Activated CD4-positive, alpha-beta T cell treated with anti-CD3 and anti-CD28 coated beads, Interleukin-2, amount 10 ng/mL, durations not matched to agents 7 days and 5 days (primary cell): ENCODE measurements at regions of chr14 and their contacts with region 1.

Region 1: DNA sequence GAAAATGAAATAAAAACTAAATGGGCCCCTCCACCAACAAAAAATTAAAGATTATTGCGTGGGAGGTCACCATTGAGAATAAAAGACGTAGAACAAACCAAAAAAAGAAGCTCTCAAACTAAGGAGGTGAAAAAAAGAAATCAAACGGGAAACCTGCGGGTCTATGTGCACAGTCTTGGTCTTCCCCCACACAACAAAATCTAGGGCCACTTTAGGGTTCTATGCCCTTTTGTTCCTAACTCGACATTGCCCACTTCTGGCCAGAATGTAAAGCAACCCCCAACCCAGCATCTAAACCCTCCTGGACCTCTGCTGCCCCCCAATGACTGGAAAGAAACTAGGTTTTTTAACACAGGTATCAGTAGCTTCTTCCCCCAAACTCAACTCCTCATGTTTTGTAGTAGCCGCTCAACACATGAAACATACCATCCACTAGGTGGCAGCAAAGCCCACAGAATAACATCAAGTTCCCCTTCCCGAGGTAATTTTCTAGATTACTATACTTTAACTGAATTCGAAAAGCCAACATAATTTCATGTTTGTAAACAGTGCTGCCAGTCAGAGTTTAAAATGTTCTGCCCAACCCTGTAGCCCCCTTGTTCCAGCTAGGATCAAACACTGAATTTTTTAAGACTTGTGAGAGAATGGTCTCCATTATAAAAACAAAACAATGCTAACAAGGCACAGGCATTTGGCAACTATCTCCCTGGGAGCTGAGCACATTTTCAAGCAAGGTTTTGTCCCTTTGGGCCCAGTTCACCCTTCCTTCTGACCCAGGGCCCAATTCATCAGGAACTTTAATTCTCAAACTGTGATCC is 18.7 kb downstream of the DAD1 start:
- DNase-seq: peak; percentile 94
- H3K4me3 Mint-ChIP-seq: peak overlapping the region; percentile 78
- H3K27ac Mint-ChIP-seq: peak overlapping the region; percentile 97
- H3K4me1 Mint-ChIP-seq: peaks cover 68% of the 10 kb centered on the region
- H3K27me3 Mint-ChIP-seq: no peaks in the 10 kb centered on the region

Region 2: DNA sequence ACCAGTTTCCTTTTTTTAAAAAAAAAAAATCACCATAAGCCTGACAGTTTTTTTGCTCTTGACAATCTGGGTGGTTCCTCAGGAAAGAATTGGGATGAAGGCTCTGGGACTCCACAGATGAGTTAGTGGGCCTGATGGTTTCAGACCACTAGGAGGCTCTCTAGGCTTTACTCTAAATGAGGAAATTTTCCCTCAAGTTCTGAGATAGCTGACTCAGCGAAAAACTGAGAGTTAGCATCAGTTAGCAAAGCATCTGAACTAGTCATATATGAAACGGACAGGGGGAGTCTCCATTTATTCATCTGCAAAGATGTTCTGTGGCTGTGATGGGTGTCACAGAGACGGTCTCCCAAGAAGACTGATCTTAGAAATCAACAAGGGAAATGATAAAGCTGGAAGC is 582.4 kb before region 1 on chr14:
- CTCF ChIA-PET with region 1: interaction called, 20 read pairs
- POLR2A ChIA-PET with region 1: no interaction called
- DNase-seq: peak; percentile 30
- H3K4me3 Mint-ChIP-seq: no peak overlapping the region
- H3K27ac Mint-ChIP-seq: peak overlapping the region; percentile 73
- H3K4me1 Mint-ChIP-seq: peaks cover 35% of the 10 kb centered on the region
- H3K27me3 Mint-ChIP-seq: peaks cover 7% of the 10 kb centered on the region

Region 3: GRCh38 chr14:22531451-22532344 is 38.6 kb before region 1 on chr14:
- CTCF ChIA-PET with region 1: interaction called, 18 read pairs
- POLR2A ChIA-PET with region 1: interaction called, 3 read pairs
- DNase-seq: no peak
- H3K4me3 Mint-ChIP-seq: peak overlapping the region; percentile 77
- H3K27ac Mint-ChIP-seq: peak overlapping the region; percentile 91
- H3K4me1 Mint-ChIP-seq: peaks cover 89% of the 10 kb centered on the region
- H3K27me3 Mint-ChIP-seq: no peaks in the 10 kb centered on the region

Region 4: GRCh38 chr14:22589096-22589839 is 18.9 kb after region 1 on chr14 and contains the start of gene DAD1:
- CTCF ChIA-PET with region 1: interaction called, 124 read pairs
- POLR2A ChIA-PET with region 1: interaction called, 3 read pairs
- DNase-seq: peak; percentile 100
- H3K4me3 Mint-ChIP-seq: peak within 1 kb of the TSS; percentile 95
- H3K27ac Mint-ChIP-seq: peak within 1 kb of the TSS; percentile 98
- H3K4me1 Mint-ChIP-seq: peaks cover 59% of the 10 kb centered on the region
- H3K27me3 Mint-ChIP-seq: peaks cover 1% of the 10 kb centered on the region
- total RNA-seq, gene DAD1: 169 to 233 TPM

Region 5: DNA sequence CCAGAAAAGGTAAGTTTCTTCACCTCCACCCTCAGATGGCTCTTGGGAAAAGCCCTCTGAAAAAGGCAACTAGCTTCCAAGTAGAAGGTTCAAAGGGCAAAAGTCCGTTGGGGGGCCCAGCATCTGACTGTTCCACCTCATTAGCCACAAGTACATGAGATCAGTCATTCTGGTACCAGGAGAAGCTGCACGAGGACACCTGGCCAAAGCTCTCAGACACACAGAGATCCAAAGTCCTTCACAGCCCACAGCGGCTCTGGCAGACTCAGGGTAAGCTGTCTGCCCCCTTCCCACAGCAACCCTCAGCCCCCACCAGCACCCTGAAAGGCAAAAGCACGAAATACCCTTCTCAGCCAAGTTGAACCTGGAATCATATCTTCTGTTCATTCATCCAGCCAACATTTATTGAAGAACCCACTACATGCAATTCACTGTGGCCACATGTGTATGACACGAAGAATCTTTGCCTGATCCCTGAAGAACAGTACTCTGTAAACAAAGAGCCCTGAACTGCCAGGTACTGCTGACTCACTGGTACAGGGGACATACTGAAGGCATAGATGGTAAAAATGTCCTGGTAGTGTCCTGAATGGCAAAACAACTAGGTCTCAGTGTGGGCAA is 225.9 kb after region 1 on chr14:
- CTCF ChIA-PET with region 1: interaction called, 10 read pairs
- POLR2A ChIA-PET with region 1: no interaction called
- DNase-seq: no peak
- H3K4me3 Mint-ChIP-seq: no peak overlapping the region
- H3K27ac Mint-ChIP-seq: no peak overlapping the region
- H3K4me1 Mint-ChIP-seq: no peaks in the 10 kb centered on the region
- H3K27me3 Mint-ChIP-seq: peaks cover 18% of the 10 kb centered on the region

Region 6: DNA sequence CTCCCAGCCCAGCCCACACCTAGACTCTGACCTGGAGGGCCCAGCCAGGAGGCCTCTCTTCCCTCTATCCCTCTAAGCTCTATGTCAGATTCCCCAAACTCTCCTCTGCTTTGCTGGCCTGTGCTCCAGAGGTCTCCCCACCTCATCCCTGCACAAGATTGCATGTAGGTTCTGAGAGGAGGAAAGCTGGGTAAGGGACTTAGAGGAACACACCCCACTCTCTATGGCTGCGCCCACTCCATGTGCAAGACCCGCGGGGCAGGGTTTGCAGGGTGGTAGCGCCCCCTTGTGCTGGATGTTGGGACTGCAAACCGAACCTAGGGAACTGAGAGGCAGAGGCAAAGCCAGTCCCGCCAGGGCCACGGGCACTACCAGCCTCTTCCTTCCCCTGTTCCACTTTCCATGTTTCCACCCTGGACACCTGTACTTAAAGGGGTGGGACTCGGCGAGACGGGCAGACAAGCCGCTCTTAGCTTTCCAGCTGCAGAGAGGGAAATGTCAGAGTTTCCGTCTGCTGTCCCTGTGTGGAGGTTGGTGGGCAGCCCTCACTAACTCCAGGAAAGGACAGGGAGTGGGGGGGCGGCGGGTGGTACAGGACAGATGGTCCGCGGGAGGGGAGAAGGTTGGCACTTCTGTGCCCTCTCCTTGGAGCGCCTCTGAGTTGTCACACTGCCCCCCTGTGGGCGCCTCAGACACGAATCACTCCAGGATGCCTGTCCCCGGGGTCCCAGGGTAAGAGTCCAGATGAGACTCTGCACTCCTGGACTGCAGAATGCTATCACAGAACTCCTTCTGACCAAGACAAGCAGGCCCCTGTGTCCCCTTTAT is 282.8 kb after region 1 on chr14:
- CTCF ChIA-PET with region 1: interaction called, 90 read pairs
- POLR2A ChIA-PET with region 1: no interaction called
- DNase-seq: peak; percentile 87
- H3K4me3 Mint-ChIP-seq: peak overlapping the region; percentile 72
- H3K27ac Mint-ChIP-seq: peak overlapping the region; percentile 66
- H3K4me1 Mint-ChIP-seq: peaks cover 37% of the 10 kb centered on the region
- H3K27me3 Mint-ChIP-seq: peaks cover 28% of the 10 kb centered on the region

Region 7: DNA sequence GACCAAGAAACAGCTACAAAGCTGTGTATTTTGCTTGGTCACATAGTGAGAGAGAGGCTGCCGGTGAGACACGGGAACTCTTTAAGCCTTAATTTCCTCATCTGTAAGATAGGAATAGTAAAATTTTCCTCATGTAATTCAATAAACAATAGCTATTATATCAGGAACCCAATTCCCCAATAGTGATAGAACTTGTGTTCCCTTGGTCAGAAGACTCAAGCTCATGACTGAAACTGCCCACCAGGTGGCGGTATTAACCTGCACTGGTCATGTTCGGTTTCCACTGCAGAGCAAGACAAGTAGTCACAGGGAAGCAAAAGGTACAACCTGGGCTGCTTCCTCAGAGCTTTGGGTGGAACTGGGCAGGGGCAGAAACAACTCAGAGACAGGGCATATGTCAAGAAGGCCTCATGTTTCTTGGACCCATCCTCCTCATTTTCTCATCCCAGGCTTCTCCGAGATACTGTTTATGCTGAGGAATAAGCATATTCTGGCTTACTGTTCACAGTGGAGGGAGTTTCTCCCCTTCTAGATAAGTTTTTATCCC is 416.2 kb after region 1 on chr14:
- CTCF ChIA-PET with region 1: interaction called, 12 read pairs
- POLR2A ChIA-PET with region 1: no interaction called
- DNase-seq: peak; percentile 94
- H3K4me3 Mint-ChIP-seq: no peak overlapping the region
- H3K27ac Mint-ChIP-seq: no peak overlapping the region
- H3K4me1 Mint-ChIP-seq: no peaks in the 10 kb centered on the region
- H3K27me3 Mint-ChIP-seq: no peaks in the 10 kb centered on the region